HEK293 (cell line): ENCODE measurements at regions of chr15 and their contacts with region 1.

Region 1: DNA sequence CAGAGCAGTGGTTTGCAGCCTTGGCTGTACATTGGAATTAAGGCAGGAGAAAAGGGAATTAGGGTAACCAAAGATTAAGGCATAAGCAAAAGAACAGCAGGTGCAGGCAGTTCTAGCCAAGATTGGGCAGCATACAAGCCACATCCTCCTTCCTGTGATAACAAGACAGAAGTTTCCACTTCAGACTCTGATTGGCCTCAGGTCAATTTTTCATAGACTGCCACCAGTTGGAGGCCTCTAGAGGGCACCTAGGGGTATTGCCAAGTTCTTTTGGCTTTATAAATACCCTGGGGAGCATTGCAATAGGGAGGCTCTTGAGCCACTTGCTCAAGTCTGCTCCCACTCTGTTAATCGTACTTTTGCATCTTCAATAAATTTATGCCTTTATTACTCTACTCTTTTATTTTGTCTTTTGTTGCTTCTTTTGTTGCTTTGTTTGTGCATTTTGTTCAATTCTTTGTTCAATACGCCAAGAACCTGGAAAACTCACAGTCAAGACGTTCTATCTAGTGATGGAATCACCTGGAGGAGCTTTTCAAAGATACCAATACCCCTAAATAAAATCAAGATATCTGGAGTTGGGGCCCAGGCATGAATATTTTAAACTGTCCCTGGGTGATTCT is 32.2 kb upstream of the FMN1 start:
- H3K4me3 ChIP-seq: no peak overlapping the region
- H3K27ac ChIP-seq: no peak overlapping the region
- H3K4me1 ChIP-seq: peaks cover 4% of the 10 kb centered on the region
- CTCF ChIP-seq: no peak

Region 2: GRCh38 chr15:33201491-33202231 is 25.0 kb before region 1 on chr15:
- CTCF ChIA-PET with region 1: interaction called, 11 read pairs
- POLR2A ChIA-PET with region 1: no interaction called
- H3K4me3 ChIP-seq: peak overlapping the region; percentile 2; the same call in 1 of the 2 replicates
- H3K27ac ChIP-seq: no peak overlapping the region
- H3K4me1 ChIP-seq: 0 out of 2 replicates have a peak, but pooled peaks cover 5% of the 10 kb centered on the region
- CTCF ChIP-seq: no peak

Region 3: GRCh38 chr15:33215941-33216872 is 10.5 kb before region 1 on chr15:
- CTCF ChIA-PET with region 1: interaction called, 23 read pairs
- POLR2A ChIA-PET with region 1: no interaction called
- H3K4me3 ChIP-seq: no peak overlapping the region
- H3K27ac ChIP-seq: no peak overlapping the region
- H3K4me1 ChIP-seq: 0 out of 2 replicates have a peak, but pooled peaks cover 7% of the 10 kb centered on the region
- CTCF ChIP-seq: no peak